Heart right ventricle (tissue), 16 donors: ENCODE measurements at regions of chr4 and their contacts with region 1.

Region 1: DNA sequence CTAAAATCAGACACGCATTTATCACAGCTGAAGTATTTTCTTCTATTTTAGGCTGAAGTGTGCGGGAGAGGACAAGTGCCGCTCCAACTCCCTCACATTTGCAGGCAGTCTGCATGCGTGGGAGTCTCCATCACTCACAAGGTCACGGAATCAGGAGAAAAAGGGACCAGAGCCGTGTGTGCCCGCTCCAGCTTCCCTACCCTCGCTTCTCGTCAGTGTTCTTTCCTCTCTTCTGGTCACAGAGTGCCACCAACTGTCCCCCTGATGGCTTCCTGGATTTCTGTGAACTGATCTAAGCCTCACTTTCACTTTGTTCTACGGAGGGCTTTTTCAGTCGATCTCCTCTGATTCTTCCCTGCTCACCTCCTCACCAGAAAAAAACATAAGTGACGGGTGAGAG is 407.4 kb upstream of the AADAT start:
- DNase-seq: no peak
- ATAC-seq: no peak
- H3K4me3 ChIP-seq: peak overlapping the region in 4 of 10 donors; percentile 17 to 37 (median 26)
- H3K27ac ChIP-seq: no peak overlapping the region
- H3K4me1 ChIP-seq: no peaks in the 10 kb centered on the region
- H3K27me3 ChIP-seq: no peaks in the 10 kb centered on the region
- CTCF ChIP-seq: no peak

Region 2: DNA sequence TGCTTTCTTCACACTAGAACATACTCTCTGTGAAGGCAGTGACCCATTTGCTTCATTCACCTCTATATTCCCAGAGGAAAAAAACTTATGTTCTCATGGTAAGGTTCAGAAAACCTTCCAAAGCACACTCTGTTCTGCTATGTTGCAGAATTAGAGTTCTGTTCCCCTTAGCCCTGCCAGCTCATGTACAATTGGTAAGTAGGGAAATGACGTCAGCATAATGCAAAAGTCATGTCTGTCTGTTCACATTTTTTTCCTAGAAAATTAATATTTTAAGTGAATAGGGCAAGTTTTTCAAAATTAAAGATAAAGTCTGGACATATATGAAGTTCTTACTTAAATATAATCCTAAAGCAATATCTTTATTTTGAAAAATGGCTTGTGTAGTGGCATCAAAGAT is 1759.7 kb after region 1 on chr4:
- intact Hi-C with region 1: loop called in 1 of 10 experiments (anchors 5 kb)
- DNase-seq: no peak
- ATAC-seq: no peak
- H3K4me3 ChIP-seq: no peak overlapping the region
- H3K27ac ChIP-seq: no peak overlapping the region
- H3K4me1 ChIP-seq: no peaks in the 10 kb centered on the region
- H3K27me3 ChIP-seq: no peaks in the 10 kb centered on the region
- CTCF ChIP-seq: no peak